ENCODE measurements at regions of chr7 and their contacts with region 1.

Region 1: GRCh38 chr7:101936611-101937231 is 119.3 kb downstream of the CUX1 start:
- DNase-seq: peak; percentile 33 to 73
- H3K4me3 ChIP-seq: peak overlapping the region; percentile 12 to 38 (median 32)
- H3K27ac ChIP-seq: peak overlapping the region; percentile 5 to 84 (median 78)
- H3K4me1 ChIP-seq: peaks cover 44 to 72% (median 55%) of the 10 kb centered on the region in 4 donors
- H3K27me3 ChIP-seq: no peaks in the 10 kb centered on the region
- CTCF ChIP-seq: no peak
- EP300 ChIP-seq: no peak
- POLR2A ChIP-seq: no peak

Region 2: DNA sequence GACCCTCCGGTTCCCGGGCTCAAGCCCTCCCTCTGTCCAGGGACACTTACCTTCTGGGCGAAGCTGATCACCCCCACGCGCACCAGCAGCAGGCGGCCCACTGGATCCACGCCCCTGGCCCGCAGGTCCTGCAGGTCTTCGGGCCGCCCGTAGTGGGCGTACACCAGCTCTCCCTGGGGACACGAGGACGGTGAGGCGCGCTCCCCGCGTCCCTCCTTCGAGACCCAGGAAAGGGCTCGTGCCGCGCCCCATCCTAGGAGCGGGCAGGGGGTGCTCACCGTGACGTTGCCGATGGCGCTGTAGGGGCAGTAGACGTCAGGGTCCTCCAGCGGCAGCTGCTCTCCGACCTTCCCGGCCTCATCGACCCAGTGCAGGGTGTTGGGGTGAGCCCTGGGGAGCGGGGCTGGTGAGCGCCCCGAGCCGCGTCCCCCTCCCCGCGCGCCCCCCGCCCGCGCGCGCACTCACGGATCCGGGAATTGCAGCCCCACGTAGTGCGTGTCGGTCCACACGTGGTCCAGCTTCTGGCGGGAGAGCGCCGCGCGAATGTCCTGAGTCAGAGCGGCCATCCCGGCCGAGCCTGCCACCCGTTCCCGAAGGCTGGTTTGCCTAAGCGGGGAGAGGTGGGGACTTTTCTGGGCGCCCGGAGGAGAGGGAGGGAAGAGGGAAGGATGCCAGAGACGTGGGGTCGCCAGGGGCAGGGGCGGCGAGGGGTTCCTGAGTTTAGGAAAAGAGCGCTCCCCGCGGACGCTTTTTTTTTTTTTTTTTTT is 1303.6 kb before region 1 on chr7:
- intact Hi-C with region 1: no loop called
- DNase-seq: peak; percentile 61 to 82
- H3K4me3 ChIP-seq: peak overlapping the region; percentile 48 to 60 (median 55)
- H3K27ac ChIP-seq: peak overlapping the region in 3 of 5 donors; percentile 10 to 38 (median 38)
- H3K4me1 ChIP-seq: peaks cover 9 to 14% (median 12%) of the 10 kb centered on the region in 4 donors
- H3K27me3 ChIP-seq: peaks cover 0 to 47% (median 7%) of the 10 kb centered on the region in 3 donors
- CTCF ChIP-seq: peak in 4 of 7 experiments; percentile 13 to 53 (median 24)
- EP300 ChIP-seq: no peak
- POLR2A ChIP-seq: no peak

Region 3: DNA sequence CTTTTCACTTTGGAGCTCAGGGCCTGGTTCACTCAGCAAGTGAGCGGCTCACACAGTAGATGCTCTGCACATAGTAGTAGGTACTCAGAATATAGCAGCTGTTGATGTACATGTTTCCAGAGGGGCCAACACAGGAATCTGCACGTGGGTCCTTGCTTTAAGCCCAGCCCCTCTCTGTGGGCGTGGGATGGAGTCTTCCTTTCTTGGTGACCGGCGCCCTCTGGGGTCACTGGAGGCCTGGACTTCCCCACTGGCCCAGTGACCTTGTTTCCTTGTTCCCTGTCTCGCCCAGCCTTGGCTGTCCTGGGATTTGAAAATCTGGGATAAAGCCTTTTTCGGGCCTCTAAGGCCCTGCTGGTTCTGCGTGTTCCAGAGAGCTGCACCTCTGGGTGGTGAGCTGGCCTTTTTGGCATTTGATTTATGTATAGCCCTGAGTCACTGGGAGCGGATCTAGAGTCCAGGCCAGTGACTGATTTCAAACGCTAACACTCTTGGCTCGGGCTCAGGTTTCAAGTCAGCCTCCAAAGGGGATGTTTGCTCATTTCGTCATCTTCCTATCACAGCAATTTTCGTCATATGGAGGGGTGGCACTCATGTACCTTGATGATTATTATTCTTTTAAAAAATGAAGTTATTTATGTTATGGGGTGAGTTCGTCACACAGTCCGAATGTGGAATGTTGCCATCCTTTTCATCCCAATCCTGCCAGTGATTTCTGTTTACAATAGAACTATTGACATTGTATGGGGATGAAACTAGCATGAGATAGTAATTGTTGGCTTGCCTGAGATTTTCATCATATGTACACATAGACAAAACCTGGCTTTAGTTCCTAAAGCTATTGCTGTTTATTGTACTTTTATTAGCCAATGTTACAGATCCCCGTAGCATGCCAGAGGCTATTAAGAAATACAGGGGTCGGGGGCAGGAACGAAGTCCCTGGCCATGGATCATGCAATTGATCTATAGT is 53.8 kb before region 1 on chr7:
- intact Hi-C with region 1: loop called (anchors 10 kb)
- DNase-seq: peak; percentile 88 to 95
- H3K4me3 ChIP-seq: no peak overlapping the region
- H3K27ac ChIP-seq: peak overlapping the region; percentile 67 to 92 (median 87)
- H3K4me1 ChIP-seq: peaks cover 43 to 88% (median 76%) of the 10 kb centered on the region in 4 donors
- H3K27me3 ChIP-seq: no peaks in the 10 kb centered on the region
- CTCF ChIP-seq: no peak
- EP300 ChIP-seq: no peak
- POLR2A ChIP-seq: no peak

Region 4: GRCh38 chr7:102140952-102141370 is 204.2 kb after region 1 on chr7:
- intact Hi-C with region 1: no loop called
- DNase-seq: peak in 1 of 2 donors; percentile 41
- H3K4me3 ChIP-seq: no peak overlapping the region
- H3K27ac ChIP-seq: no peak overlapping the region
- H3K4me1 ChIP-seq: no peaks in the 10 kb centered on the region
- H3K27me3 ChIP-seq: no peaks in the 10 kb centered on the region
- CTCF ChIP-seq: no peak
- EP300 ChIP-seq: no peak
- POLR2A ChIP-seq: no peak